BJ (cell line): ENCODE measurements at regions of chr1 and their contacts with region 1.

Region 1: DNA sequence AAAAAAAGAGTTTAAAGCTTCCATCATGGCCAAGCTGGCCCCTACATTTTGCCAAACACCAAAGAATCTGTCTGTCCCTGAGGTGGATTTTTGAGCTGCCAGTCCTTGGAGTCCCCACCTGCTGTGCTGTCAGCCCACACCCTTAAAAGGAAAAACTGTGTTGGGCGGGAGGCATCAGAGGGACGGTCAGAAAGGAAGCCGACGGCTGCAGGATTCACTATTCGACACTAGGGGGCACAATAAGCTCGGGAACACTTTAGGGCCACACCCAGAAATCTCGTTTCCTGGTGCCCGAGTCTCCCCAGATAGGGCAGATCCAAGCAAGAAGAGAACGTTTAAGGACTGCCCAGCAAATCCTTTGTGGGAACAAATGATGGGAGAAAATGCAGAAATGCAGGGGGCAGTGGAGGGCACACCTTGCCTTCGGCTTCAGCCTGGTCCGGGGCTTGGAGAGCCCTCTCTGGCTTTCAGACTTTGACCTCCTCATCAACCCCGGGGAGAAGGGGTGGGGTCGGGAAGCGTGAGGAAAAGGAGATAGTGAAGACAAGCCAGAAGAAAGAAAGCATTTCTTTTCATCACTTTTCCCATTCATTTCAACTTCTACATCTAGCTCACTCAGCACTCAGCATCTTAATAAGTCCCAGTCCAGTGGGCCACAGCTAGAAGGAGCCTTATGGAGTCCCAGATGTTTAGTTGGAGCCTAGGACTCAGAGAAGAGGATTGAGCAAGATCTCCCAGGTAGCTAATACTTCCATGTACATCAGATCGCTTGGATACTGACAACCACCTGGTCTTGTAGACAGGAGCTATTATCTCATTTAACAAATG is 5.0 kb upstream of the CTTNBP2NL start:
- DNase-seq: peak; percentile 39
- H3K4me3 ChIP-seq: peak overlapping the region; percentile 28
- H3K27me3 ChIP-seq: no peaks in the 10 kb centered on the region
- CTCF ChIP-seq: peak; percentile 92

Region 2: GRCh38 chr1:111139956-111140679 is 1250.9 kb before region 1 on chr1 and contains the starts of genes CEPT1 and DRAM2:
- CTCF ChIA-PET with region 1: no interaction called
- POLR2A ChIA-PET with region 1: interaction called, 14 read pairs
- DNase-seq: peak; percentile 68
- H3K4me3 ChIP-seq: peak within 1 kb of the TSS; percentile 89
- H3K27me3 ChIP-seq: no peaks in the 10 kb centered on the region
- CTCF ChIP-seq: 0 out of 2 replicates have a peak, but pooled peaks have one; percentile 11
- polyA plus RNA-seq, gene CEPT1: 15.5 and 30.9 TPM in 2 replicates
- polyA plus RNA-seq, gene DRAM2: 58.8 and 110 TPM in 2 replicates

Region 3: GRCh38 chr1:112457241-112457640 is 66.3 kb after region 1 on chr1:
- CTCF ChIA-PET with region 1: interaction called, 119 read pairs
- POLR2A ChIA-PET with region 1: no interaction called
- DNase-seq: no peak
- H3K4me3 ChIP-seq: no peak overlapping the region
- H3K27me3 ChIP-seq: no peaks in the 10 kb centered on the region
- CTCF ChIP-seq: no peak

Region 4: GRCh38 chr1:112501810-112502641 is 111.0 kb after region 1 on chr1:
- CTCF ChIA-PET with region 1: interaction called, 19 read pairs
- POLR2A ChIA-PET with region 1: interaction called, 4 read pairs
- DNase-seq: no peak
- H3K4me3 ChIP-seq: peak overlapping the region; percentile 49
- H3K27me3 ChIP-seq: no peaks in the 10 kb centered on the region
- CTCF ChIP-seq: peak; percentile 93

Region 5: DNA sequence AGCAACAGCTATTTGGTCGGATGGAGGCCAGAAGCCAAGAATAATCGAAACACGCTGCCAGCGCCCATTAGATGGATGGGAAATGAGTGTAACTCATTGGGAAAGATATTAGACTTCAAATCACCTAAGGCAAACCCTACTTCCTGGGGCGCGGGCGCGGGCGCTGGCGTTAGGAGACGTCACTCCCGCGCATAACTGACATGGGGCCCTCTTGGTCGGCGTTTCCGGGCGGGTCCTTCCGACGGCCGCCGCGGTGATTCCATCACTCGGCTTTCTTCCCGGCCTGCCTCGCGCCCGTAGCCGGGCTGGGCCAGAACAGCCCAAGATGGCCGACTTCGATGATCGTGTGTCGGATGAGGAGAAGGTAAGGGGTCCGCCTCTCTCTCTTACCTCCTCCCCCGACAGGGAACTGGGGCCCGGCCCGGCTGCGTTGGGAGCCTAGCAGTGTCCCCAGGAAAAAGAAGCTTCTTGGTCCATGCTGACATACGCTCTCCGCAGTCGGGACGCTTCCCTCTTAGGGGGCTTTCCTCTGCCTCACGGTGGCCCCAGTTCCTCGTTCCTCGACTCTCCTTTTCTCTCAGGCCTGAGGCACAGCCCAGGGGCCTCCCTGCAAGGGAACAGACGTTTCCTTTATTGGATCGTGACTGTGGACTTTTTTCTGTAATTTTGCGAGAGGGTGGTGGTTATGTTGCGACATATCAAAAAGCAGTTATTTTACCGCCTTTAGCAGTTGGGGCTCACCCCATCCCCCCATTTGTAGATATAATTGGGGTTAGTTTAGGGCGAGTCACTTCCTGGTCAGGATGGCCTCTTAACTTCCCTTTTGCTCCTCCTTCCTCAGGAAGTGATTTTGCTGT is 228.8 kb after region 1 on chr1 and contains the start of gene CAPZA1:
- CTCF ChIA-PET with region 1: interaction called, 29 read pairs
- POLR2A ChIA-PET with region 1: no interaction called
- DNase-seq: peak; percentile 58
- H3K4me3 ChIP-seq: peak within 1 kb of the TSS; percentile 89
- H3K27me3 ChIP-seq: no peaks in the 10 kb centered on the region
- CTCF ChIP-seq: no peak
- polyA plus RNA-seq, gene CAPZA1: 65.1 and 165 TPM in 2 replicates

Region 6: DNA sequence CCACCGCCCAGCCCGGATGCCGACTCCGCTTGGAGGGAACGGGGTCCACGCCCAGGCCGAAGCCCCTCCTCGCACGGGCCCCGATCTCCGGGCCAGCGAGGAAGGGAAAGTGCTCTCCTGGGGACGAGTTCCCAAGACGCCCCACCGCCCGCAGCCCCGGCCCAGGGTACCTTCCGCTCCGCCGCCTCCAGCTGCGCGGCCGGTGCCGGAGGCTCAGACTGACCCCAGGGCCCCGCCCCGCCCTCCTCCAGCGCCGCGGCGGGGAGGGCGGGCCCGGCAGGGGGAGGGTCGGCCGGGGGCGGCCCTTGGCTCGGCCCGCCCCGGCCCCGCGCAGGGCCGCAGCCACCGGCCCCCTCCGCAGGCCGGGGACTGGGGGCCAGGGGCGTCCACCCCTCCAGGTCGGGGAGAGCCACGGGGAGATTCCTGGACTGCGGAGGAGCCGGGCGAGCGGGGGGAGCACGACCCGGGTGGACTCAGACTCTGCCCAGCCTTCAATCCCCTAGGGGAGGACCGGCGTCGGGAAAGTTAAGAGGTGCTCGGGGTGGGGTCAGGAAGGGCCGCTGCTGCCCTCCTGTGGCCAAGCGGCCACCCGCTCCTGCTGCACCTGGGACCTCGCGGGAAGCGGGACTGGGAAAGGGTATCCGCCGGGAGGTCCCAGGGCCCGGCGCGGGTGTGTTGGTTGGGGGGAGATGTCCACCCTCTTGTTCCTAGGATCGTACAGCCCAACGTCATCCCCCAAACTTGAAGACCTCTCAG is 316.1 kb after region 1 on chr1 and contains the start of gene RHOC:
- CTCF ChIA-PET with region 1: interaction called, 28 read pairs
- POLR2A ChIA-PET with region 1: interaction called, 4 read pairs
- DNase-seq: no peak
- H3K4me3 ChIP-seq: peak within 1 kb of the TSS; percentile 70
- H3K27me3 ChIP-seq: no peaks in the 10 kb centered on the region
- CTCF ChIP-seq: peak; percentile 98
- polyA plus RNA-seq, gene RHOC: 1,093 and 1,537 TPM in 2 replicates